ENCODE measurements at regions of chr16 and their contacts with region 1.

Region 1: DNA sequence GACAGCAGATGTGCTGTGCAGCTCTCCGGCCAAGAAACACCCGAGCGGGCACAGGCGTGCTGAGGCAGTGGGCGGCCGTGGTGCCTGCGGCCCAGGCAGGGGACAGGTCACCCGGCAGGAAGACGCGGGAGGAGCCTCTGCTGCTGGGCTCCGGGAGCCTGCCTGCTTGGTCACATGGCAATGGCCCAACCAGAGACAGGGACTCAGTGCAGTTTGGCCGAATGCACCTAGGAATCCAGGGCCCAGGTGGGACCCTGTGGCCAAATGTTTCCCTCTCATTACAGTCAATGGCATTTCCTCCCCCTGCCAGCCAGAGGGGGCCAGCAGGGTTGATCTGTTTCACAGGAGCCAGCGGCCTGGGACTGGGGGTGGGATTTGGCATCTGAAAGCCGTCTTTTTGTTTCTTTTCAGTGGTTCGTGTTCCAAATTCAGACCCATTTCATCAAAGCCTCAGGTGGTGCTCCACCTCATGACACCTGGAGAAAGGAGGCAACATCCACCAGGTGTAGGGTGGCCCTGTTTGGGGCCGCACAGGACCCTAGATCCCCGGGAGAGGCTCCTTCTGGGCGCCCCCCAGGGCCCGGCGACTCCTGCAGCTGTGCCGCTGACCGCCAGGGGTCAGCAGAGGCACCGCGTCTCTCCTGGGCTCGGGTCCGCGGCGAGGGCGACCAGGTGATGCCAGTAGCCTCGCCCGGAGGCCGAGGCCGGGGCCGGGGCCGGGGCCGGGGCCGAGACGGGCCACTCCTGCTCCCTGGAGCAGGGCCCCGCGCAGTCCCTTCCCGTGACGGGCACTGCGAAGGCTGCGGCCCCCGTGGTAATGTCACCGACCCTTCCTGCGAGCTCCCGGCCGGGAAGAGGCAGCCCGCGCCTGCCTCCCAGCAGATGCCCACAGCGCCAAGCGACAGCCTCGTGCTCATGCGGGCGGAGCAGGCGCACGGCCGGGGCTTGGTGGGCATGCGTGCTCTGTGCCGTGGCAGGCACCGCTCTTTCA is 118.5 kb downstream of the C16orf78 start:
- DNase-seq: peak; percentile 44 to 80 (median 53)
- ATAC-seq: peak; percentile 55 to 88 (median 73)
- H3K4me3 ChIP-seq: peak overlapping the region in 11 of 12 donors; percentile 0 to 56 (median 46)
- H3K27ac ChIP-seq: peak overlapping the region in 6 of 12 donors; percentile 2 to 67 (median 42)
- H3K4me1 ChIP-seq: peaks cover 0 to 17% (median 7%) of the 10 kb centered on the region in 12 donors
- H3K27me3 ChIP-seq: no peaks in the 10 kb centered on the region
- CTCF ChIP-seq: peak in 11 of 12 donors; percentile 92 to 98 (median 96)
- POLR2A ChIP-seq: peak in 1 of 2 donors; percentile 12

Region 2: GRCh38 chr16:49382916-49383315 is 109.2 kb before region 1 on chr16:
- intact Hi-C with region 1: no loop called
- DNase-seq: no peak
- ATAC-seq: no peak
- H3K4me3 ChIP-seq: no peak overlapping the region
- H3K27ac ChIP-seq: no peak overlapping the region
- H3K4me1 ChIP-seq: no peaks in the 10 kb centered on the region
- H3K27me3 ChIP-seq: peaks cover 0 to under 1% (median 0%) of the 10 kb centered on the region in 9 donors
- CTCF ChIP-seq: no peak
- POLR2A ChIP-seq: no peak

Region 3: GRCh38 chr16:49441366-49441780 is 50.7 kb before region 1 on chr16:
- intact Hi-C with region 1: loop called in 2 of 10 experiments (anchors 5 kb)
- DNase-seq: peak; percentile 45 to 79 (median 71)
- ATAC-seq: peak; percentile 67 to 96 (median 72)
- H3K4me3 ChIP-seq: peak overlapping the region in 6 of 12 donors; percentile 8 to 38 (median 17)
- H3K27ac ChIP-seq: peak overlapping the region in 10 of 12 donors; percentile 35 to 84 (median 60)
- H3K4me1 ChIP-seq: peaks cover 0 to 21% (median 16%) of the 10 kb centered on the region in 12 donors
- H3K27me3 ChIP-seq: peaks cover 0 to 6% (median 0%) of the 10 kb centered on the region in 9 donors
- CTCF ChIP-seq: peak in 9 of 12 donors; percentile 23 to 56 (median 42)
- POLR2A ChIP-seq: no peak

Region 4: DNA sequence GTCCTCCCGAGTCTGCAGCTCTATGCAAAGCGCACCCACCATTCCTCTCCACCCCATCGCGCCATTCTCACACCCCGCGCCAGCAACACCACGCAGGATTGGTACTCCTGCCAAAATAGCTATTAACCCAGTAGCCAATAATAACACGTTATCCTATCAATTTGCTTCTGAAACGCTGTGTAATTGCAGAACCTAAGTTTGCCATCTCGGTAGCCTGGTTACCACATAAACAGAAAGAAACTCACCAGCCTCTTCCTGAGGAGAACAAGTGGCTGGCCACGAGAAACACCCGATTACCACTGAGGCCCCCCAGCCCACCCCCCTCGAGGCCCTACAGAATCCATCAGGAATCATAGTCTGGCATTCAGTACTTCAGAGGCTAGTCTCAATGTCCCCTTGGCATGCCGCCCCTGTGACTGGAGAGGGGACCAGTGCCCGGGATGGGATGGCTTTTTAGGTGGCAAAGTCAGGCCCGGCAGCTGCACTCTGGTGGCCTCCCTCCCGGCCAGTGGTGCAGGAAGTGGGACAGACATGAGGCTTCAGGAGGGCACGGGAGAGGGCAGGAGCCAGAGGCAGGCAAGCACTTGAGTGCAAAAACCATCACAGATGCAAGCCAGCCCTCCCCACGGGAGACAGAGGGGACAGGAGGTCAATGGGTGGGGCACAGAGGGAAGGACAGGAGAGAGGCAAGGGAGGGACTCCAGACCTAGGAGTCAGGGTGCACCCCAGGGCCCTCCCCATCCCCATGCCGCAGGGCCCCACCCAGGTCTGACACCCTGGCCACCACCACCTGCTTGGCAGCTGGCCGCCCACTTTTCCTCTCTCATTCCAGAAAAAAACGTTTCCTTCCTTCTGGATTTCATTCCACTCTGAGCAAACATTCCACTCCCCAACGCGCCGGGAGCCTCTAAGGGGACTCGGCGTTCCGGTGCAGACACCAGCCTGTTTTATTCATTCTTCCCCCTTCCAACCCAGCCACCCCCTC is 171.3 kb after region 1 on chr16:
- intact Hi-C with region 1: no loop called
- DNase-seq: peak; percentile 29 to 68 (median 39)
- ATAC-seq: peak; percentile 42 to 73 (median 62)
- H3K4me3 ChIP-seq: peak overlapping the region in 11 of 12 donors; percentile 10 to 60 (median 46)
- H3K27ac ChIP-seq: peak overlapping the region; percentile 38 to 89 (median 76)
- H3K4me1 ChIP-seq: peaks cover 0 to 41% (median 21%) of the 10 kb centered on the region in 12 donors
- H3K27me3 ChIP-seq: no peaks in the 10 kb centered on the region
- CTCF ChIP-seq: no peak
- POLR2A ChIP-seq: no peak

Region 5: DNA sequence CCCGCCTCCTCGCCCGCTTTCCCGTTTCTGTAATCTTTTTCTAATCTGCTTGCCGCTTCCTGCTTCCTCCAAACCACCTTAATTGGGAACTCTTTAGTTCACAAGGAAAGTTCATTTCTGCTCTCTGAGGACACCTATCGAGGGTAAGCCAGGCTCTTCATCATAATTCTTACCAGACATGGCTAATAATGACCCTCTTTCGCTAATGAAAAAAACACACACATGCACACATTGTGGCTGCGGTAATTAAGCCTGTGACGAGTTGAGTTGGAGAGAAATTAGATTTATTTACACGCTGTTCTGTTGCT is 263.2 kb after region 1 on chr16:
- intact Hi-C with region 1: loop called in 4 of 10 experiments (anchors 5 to 10 kb)
- DNase-seq: peak in 1 of 5 donors; percentile 30
- ATAC-seq: peak; percentile 26 to 82 (median 64)
- H3K4me3 ChIP-seq: peak overlapping the region in 11 of 12 donors; percentile 19 to 55 (median 46)
- H3K27ac ChIP-seq: peak overlapping the region in 11 of 12 donors; percentile 52 to 92 (median 85)
- H3K4me1 ChIP-seq: peaks cover 0 to 45% (median 23%) of the 10 kb centered on the region in 12 donors
- H3K27me3 ChIP-seq: peaks cover 0 to 4% (median 0%) of the 10 kb centered on the region in 9 donors
- CTCF ChIP-seq: peak; percentile 19 to 72 (median 58)
- POLR2A ChIP-seq: no peak

Region 6: GRCh38 chr16:49876716-49877129 is 384.7 kb after region 1 on chr16:
- intact Hi-C with region 1: loop called in 5 of 10 experiments (anchors 1 to 10 kb)
- DNase-seq: peak; percentile 71 to 89 (median 81)
- ATAC-seq: peak; percentile 55 to 97 (median 88)
- H3K4me3 ChIP-seq: peak overlapping the region in 11 of 12 donors; percentile 18 to 56 (median 47)
- H3K27ac ChIP-seq: peak overlapping the region in 2 of 12 donors; percentile 11 to 45
- H3K4me1 ChIP-seq: peaks cover 0 to 12% (median 4%) of the 10 kb centered on the region in 12 donors
- H3K27me3 ChIP-seq: peaks cover 0 to 22% (median 6%) of the 10 kb centered on the region in 9 donors
- CTCF ChIP-seq: peak; percentile 91 to 99 (median 94)
- POLR2A ChIP-seq: no peak

Region 7: GRCh38 chr16:49921791-49922456 is 429.9 kb after region 1 on chr16:
- intact Hi-C with region 1: loop called in 6 of 10 experiments (anchors 5 to 10 kb)
- DNase-seq: peak in 4 of 5 donors; percentile 36 to 62 (median 58)
- ATAC-seq: peak; percentile 60 to 85 (median 70)
- H3K4me3 ChIP-seq: no peak overlapping the region
- H3K27ac ChIP-seq: no peak overlapping the region
- H3K4me1 ChIP-seq: no peaks in the 10 kb centered on the region
- H3K27me3 ChIP-seq: peaks cover 0 to 5% (median 0%) of the 10 kb centered on the region in 9 donors
- CTCF ChIP-seq: peak; percentile 33 to 78 (median 64)
- POLR2A ChIP-seq: no peak

Measured in heart left ventricle (tissue), 16 donors.